Activated CD4-positive, alpha-beta T cell treated with anti-CD3 and anti-CD28 coated beads for 36 hours (primary cell): ENCODE measurements at regions of chr2 and their contacts with region 1.

Region 1: DNA sequence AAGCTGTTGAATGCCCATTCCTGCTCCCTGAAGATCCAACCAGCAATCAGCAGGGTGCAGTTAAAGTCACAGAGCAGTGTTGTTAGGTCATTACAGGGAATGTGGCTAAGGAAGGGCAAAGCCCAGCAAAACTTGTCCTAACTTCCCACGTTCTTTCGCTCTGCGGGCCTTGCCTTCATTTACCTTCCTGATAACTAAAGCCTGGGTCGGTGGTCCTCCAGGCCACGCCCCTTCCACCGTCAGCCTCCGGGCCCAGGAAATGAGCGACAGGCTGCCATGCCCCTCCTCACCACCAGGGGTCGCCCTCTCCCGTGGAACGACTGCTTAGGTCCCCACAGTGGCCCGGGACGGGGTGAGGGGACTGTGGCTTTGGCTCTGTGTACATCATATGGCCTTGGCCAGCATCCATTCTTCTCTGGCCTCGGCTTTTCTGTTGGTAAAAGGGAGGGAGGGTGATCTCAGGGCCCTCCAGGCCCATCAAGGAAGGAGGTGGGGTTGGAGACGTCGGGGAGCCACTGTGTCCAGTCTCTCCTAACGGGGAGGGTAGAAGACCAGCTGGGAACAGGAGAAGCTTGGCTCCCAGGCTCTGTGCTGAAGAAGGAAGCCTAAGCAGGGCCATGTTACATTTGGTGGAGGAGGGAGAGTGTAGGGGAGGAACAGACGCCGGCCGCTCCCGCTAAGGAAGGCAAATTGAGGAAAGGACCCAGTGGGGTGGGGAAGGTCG is 2.2 kb downstream of the SH2D6 start:
- DNase-seq: peak; percentile 95
- ATAC-seq: peak; percentile 76
- H3K4me3 Mint-ChIP-seq: peak overlapping the region; percentile 38
- H3K27ac Mint-ChIP-seq: peak overlapping the region; percentile 84
- H3K4me1 Mint-ChIP-seq: peaks cover 21% of the 10 kb centered on the region
- H3K27me3 Mint-ChIP-seq: no peaks in the 10 kb centered on the region

Region 2: GRCh38 chr2:84459018-84459943 is 961.4 kb before region 1 on chr2 and contains the start of gene SUCLG1:
- CTCF ChIA-PET with region 1: no interaction called
- POLR2A ChIA-PET with region 1: no interaction called
- intact Hi-C with region 1: loop called in 1 of 2 experiments (anchors 5 kb)
- DNase-seq: peak; percentile 92
- ATAC-seq: peak; percentile 93
- H3K4me3 Mint-ChIP-seq: peak within 1 kb of the TSS; percentile 94
- H3K27ac Mint-ChIP-seq: peak within 1 kb of the TSS; percentile 98
- H3K4me1 Mint-ChIP-seq: peaks cover 34% of the 10 kb centered on the region
- H3K27me3 Mint-ChIP-seq: no peaks in the 10 kb centered on the region
- total RNA-seq, gene SUCLG1: 60.7 to 68.9 TPM

Region 3: GRCh38 chr2:84686783-84687476 is 733.8 kb before region 1 on chr2:
- CTCF ChIA-PET with region 1: no interaction called
- POLR2A ChIA-PET with region 1: no interaction called
- intact Hi-C with region 1: no loop called
- DNase-seq: no peak
- ATAC-seq: peak; percentile 90
- H3K4me3 Mint-ChIP-seq: no peak overlapping the region
- H3K27ac Mint-ChIP-seq: no peak overlapping the region
- H3K4me1 Mint-ChIP-seq: peaks cover 23% of the 10 kb centered on the region
- H3K27me3 Mint-ChIP-seq: no peaks in the 10 kb centered on the region

Region 4: GRCh38 chr2:85390941-85391669 is 29.6 kb before region 1 on chr2:
- CTCF ChIA-PET with region 1: interaction called, 4 read pairs
- POLR2A ChIA-PET with region 1: no interaction called
- intact Hi-C with region 1: loop called (anchors 2 kb)
- DNase-seq: peak; percentile 88
- ATAC-seq: peak; percentile 88
- H3K4me3 Mint-ChIP-seq: no peak overlapping the region
- H3K27ac Mint-ChIP-seq: no peak overlapping the region
- H3K4me1 Mint-ChIP-seq: peaks cover 6% of the 10 kb centered on the region
- H3K27me3 Mint-ChIP-seq: no peaks in the 10 kb centered on the region

Region 5: GRCh38 chr2:85485815-85486214 is 65.1 kb after region 1 on chr2:
- CTCF ChIA-PET with region 1: no interaction called
- POLR2A ChIA-PET with region 1: no interaction called
- intact Hi-C with region 1: no loop called
- DNase-seq: no peak
- ATAC-seq: no peak
- H3K4me3 Mint-ChIP-seq: no peak overlapping the region
- H3K27ac Mint-ChIP-seq: no peak overlapping the region
- H3K4me1 Mint-ChIP-seq: no peaks in the 10 kb centered on the region
- H3K27me3 Mint-ChIP-seq: no peaks in the 10 kb centered on the region

Region 6: GRCh38 chr2:85545780-85546240 is 125.1 kb after region 1 on chr2:
- CTCF ChIA-PET with region 1: interaction called, 205 read pairs
- POLR2A ChIA-PET with region 1: interaction called, 26 read pairs
- intact Hi-C with region 1: no loop called
- DNase-seq: no peak
- ATAC-seq: peak; percentile 20
- H3K4me3 Mint-ChIP-seq: peak overlapping the region; percentile 3
- H3K27ac Mint-ChIP-seq: no peak overlapping the region
- H3K4me1 Mint-ChIP-seq: peaks cover 26% of the 10 kb centered on the region
- H3K27me3 Mint-ChIP-seq: no peaks in the 10 kb centered on the region

Region 7: DNA sequence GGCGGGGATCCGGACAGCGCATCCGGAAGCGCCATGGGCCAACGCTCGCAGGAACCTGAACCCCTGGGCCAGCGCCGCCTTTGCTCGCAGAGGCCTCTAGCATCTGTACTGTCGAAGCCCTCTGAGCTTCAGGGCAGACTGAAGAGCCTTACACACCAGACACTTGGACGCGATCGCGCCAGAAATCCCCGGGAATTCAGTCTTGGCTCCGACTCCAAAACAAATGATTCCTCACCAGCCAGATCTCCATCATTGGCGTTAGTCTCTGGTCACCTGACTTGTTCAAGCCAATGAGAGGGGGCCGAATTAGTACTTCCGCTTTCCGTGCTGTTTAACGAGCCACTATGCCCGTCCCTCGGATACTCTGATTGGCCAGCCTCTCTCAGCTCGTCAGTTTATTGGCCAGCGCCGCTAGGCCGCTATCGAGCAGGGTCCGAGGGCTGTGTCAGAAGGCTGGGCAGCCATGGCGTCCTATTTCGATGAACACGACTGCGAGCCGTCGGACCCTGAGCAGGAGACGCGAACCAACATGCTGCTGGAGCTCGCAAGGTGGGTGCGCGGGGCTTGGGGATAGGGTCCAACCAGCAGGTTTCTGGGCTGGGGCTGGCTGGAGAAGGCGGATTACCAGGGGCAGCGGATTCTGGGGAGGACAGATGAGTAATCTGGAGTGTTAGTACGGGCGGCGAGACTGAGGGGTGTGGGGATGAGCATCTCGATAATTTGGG is 174.8 kb after region 1 on chr2 and contains the start of gene RNF181:
- CTCF ChIA-PET with region 1: interaction called, 5 read pairs
- POLR2A ChIA-PET with region 1: interaction called, 5 read pairs
- intact Hi-C with region 1: loop called in 1 of 2 experiments (anchors 2 kb)
- DNase-seq: peak; percentile 94
- ATAC-seq: peak; percentile 100
- H3K4me3 Mint-ChIP-seq: peak within 1 kb of the TSS; percentile 100
- H3K27ac Mint-ChIP-seq: peak within 1 kb of the TSS; percentile 99
- H3K4me1 Mint-ChIP-seq: peaks cover 28% of the 10 kb centered on the region
- H3K27me3 Mint-ChIP-seq: no peaks in the 10 kb centered on the region
- total RNA-seq, gene RNF181: 113 to 140 TPM

Region 8: DNA sequence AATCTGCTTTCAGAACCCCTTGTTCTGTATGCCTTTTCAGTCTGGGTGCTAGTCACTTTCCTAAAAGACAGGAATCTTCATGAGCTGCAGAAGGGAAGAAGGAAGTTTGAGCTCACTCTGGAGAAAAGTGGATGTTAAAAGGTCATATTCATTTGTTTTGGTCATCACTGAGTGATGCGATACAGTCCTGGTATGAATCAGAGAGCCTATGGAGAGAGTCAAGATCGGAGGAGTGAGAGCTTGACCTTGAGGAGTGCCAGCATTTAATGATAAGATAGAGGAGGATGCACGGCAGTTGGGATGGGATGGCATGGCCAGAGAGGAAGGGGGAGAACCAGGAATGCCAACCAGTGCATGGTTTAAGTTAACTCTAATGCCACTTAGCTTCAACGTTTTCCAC is 214.9 kb after region 1 on chr2:
- CTCF ChIA-PET with region 1: interaction called, 7 read pairs
- POLR2A ChIA-PET with region 1: no interaction called
- intact Hi-C with region 1: loop called in 1 of 2 experiments (anchors 2 kb)
- DNase-seq: no peak
- ATAC-seq: no peak
- H3K4me3 Mint-ChIP-seq: no peak overlapping the region
- H3K27ac Mint-ChIP-seq: no peak overlapping the region
- H3K4me1 Mint-ChIP-seq: peaks cover 10% of the 10 kb centered on the region
- H3K27me3 Mint-ChIP-seq: no peaks in the 10 kb centered on the region